Activated CD4-positive, alpha-beta memory T cell treated with anti-CD3 and anti-CD28 coated beads, Interleukin-2, amount 10 ng/mL, durations not matched to agents 7 days and 5 days (primary cell): ENCODE measurements at regions of chr9 and their contacts with region 1.

Region 1: GRCh38 chr9:89602978-89603766 is 1.6 kb upstream of the GADD45G start:
- DNase-seq: peak; percentile 92
- H3K4me3 Mint-ChIP-seq: peak overlapping the region; percentile 71
- H3K27ac Mint-ChIP-seq: peak overlapping the region; percentile 63
- H3K4me1 Mint-ChIP-seq: peaks cover 31% of the 10 kb centered on the region
- H3K27me3 Mint-ChIP-seq: peaks cover 24% of the 10 kb centered on the region

Region 2: GRCh38 chr9:89674667-89675057 is 71.5 kb after region 1 on chr9:
- CTCF ChIA-PET with region 1: no interaction called
- POLR2A ChIA-PET with region 1: no interaction called
- DNase-seq: no peak
- H3K4me3 Mint-ChIP-seq: no peak overlapping the region
- H3K27ac Mint-ChIP-seq: no peak overlapping the region
- H3K4me1 Mint-ChIP-seq: peaks cover 7% of the 10 kb centered on the region
- H3K27me3 Mint-ChIP-seq: no peaks in the 10 kb centered on the region

Region 3: DNA sequence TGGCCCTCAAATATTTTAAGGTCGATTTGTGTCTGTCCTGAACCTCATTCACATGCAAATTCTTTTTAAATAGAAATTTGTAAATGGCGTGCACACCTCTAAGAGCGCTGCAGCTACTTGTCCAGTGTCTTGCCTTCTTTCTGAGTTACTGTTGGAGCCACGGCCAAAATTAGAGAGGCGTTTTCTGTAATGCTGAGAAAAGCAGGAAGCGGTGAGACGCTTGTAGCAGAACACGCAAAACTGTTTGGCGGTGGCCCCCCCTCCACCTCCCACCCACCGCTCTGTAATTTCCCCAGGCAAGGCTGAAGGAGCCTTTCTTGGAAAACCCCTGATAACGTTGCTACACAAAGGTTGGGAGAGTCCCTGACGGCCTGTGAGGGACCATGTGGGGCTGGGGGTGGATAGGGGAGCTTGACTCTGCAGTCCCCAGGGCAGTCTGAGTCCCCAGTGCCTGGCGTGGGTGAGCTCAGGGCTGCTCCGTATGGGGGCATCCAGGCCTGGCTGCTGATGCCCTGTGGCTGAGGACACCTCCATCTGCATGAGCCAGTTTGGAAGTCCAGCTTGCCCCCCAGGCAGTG is 98.1 kb after region 1 on chr9:
- CTCF ChIA-PET with region 1: interaction called, 4 read pairs
- POLR2A ChIA-PET with region 1: interaction called, 14 read pairs
- DNase-seq: peak; percentile 80
- H3K4me3 Mint-ChIP-seq: peak overlapping the region; percentile 76
- H3K27ac Mint-ChIP-seq: peak overlapping the region; percentile 89
- H3K4me1 Mint-ChIP-seq: peaks cover 79% of the 10 kb centered on the region
- H3K27me3 Mint-ChIP-seq: no peaks in the 10 kb centered on the region

Region 4: DNA sequence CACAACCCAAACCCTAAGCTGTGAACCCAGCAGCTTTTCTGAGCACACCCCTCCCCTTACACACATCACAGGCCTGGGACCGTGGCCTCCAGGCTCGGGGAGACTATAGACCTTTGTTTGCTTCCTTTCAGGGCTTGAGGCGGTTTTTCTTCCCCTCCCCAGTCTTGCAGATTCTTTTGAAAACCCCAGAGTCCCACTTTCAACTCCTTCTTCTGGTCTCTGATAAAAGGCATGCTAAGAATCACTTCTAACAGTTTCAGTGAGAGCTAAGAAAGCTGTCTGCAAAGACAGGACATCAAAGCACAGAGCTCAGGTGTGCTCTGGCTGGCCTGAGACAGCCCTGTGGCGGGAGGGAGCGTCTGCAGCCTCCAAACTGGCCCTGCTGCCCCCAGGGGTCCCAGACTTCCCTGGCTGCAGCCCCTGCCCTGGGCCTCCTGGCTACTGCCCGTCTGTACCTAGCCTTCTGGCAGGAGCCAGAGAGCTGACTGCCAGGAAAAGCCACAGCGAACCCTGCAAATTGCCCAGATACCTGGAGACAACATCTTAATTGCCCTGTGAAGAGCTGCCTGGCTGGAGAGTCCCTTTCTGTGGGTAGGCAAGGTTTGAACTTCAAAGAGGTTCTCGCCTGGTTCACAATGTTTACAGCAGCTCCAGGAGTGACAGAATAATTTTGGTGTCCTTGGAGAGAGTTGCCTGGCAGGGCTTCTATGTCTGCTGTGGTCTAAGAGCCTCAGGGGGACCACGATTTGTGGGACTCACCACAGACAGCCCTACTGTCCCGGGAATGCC is 140.6 kb after region 1 on chr9:
- CTCF ChIA-PET with region 1: interaction called, 39 read pairs
- POLR2A ChIA-PET with region 1: interaction called, 43 read pairs
- DNase-seq: peak; percentile 81
- H3K4me3 Mint-ChIP-seq: peak overlapping the region; percentile 41
- H3K27ac Mint-ChIP-seq: peak overlapping the region; percentile 96
- H3K4me1 Mint-ChIP-seq: peaks cover 85% of the 10 kb centered on the region
- H3K27me3 Mint-ChIP-seq: no peaks in the 10 kb centered on the region

Region 5: GRCh38 chr9:89919169-89919681 is 316.1 kb after region 1 on chr9:
- CTCF ChIA-PET with region 1: interaction called, 50 read pairs
- POLR2A ChIA-PET with region 1: interaction called, 6 read pairs
- DNase-seq: peak; percentile 62
- H3K4me3 Mint-ChIP-seq: no peak overlapping the region
- H3K27ac Mint-ChIP-seq: no peak overlapping the region
- H3K4me1 Mint-ChIP-seq: peaks cover 14% of the 10 kb centered on the region
- H3K27me3 Mint-ChIP-seq: peaks cover 28% of the 10 kb centered on the region

Region 6: GRCh38 chr9:90078988-90079421 is 475.8 kb after region 1 on chr9:
- CTCF ChIA-PET with region 1: interaction called, 10 read pairs
- POLR2A ChIA-PET with region 1: interaction called, 7 read pairs
- DNase-seq: no peak
- H3K4me3 Mint-ChIP-seq: no peak overlapping the region
- H3K27ac Mint-ChIP-seq: no peak overlapping the region
- H3K4me1 Mint-ChIP-seq: peaks cover 11% of the 10 kb centered on the region
- H3K27me3 Mint-ChIP-seq: peaks cover 37% of the 10 kb centered on the region

Region 7: DNA sequence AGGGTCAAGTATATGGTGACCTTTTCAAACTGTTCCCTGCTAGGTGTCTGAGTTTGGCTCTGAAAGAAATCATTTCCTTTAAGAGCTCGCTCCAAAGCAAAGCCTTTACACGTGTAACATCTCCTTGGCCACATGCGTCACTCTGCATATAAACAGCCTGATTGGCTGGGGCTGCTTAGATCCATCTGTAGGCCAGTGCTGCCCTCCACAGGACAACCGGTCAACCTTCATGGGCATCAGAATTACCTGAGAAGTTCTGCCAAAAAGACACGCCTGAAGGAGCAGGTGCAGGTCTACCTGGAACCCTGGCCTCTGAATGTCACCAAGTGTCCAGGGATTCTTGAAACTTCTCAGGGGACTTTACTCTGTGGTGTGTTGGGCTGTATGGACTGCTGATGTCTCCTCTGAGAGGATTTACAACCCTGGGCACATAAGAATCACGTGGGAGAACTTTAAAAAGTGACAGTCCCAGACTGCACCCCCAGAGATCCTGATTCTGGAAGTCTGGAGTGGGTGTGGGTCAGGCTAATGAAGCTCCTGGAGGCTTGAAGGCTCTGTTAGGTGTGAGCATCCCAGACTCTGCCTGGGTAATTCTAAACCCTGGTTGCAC is 499.2 kb after region 1 on chr9:
- CTCF ChIA-PET with region 1: interaction called, 235 read pairs
- POLR2A ChIA-PET with region 1: interaction called, 7 read pairs
- DNase-seq: peak; percentile 84
- H3K4me3 Mint-ChIP-seq: no peak overlapping the region
- H3K27ac Mint-ChIP-seq: no peak overlapping the region
- H3K4me1 Mint-ChIP-seq: peaks cover 14% of the 10 kb centered on the region
- H3K27me3 Mint-ChIP-seq: peaks cover 2% of the 10 kb centered on the region